Ovary (tissue), 10 donors: ENCODE measurements at regions of chr12 and their contacts with region 1.

Region 1: DNA sequence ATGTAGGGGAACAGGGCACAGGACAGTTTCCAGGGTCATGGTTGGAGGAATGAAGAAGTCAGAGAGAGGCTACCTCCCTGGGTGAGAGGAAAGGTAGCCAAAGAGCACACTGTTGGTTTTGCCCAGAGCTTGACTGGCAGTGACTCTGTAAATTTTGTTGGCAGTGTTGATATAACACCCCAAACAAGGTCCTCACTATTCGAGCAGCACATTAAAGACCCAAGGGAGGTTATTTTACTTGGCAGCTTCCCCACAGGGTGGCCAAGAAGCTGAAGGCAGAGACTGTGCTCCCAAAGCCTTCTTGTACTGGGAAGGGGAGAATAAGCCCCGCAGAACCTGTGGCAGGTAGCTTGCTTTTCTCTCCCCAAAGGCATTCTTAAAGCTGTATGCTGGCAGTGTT is 40.6 kb downstream of the WSCD2 start:
- DNase-seq: no peak
- H3K4me3 ChIP-seq: no peak overlapping the region
- H3K27ac ChIP-seq: no peak overlapping the region
- H3K4me1 ChIP-seq: no peaks in the 10 kb centered on the region
- H3K27me3 ChIP-seq: no peaks in the 10 kb centered on the region
- CTCF ChIP-seq: no peak
- EP300 ChIP-seq: no peak
- POLR2A ChIP-seq: no peak

Region 2: DNA sequence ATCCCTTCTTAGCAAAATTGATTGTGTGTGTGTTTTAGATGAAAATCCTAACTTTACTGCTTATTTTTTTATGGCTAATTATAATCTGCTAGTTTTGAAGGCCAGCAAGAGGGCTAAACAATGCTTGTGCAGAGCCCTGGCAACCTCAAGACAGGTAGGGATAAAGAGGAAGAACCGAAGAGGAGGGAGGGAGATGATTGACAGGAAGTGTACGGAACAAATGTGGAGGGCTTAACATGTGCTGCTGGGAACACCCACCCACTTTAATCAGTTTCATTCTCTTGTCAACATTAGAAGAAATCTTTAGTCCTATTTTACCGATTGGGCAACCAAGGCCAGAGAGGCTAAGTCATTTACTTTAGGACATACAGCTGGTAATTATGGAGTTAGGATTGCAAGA is 42.1 kb before region 1 on chr12:
- intact Hi-C with region 1: loop called in 1 of 4 experiments (anchors 1 kb)
- DNase-seq: no peak
- H3K4me3 ChIP-seq: no peak overlapping the region
- H3K27ac ChIP-seq: no peak overlapping the region
- H3K4me1 ChIP-seq: no peaks in the 10 kb centered on the region
- H3K27me3 ChIP-seq: no peaks in the 10 kb centered on the region
- CTCF ChIP-seq: no peak
- EP300 ChIP-seq: no peak
- POLR2A ChIP-seq: no peak

Region 3: DNA sequence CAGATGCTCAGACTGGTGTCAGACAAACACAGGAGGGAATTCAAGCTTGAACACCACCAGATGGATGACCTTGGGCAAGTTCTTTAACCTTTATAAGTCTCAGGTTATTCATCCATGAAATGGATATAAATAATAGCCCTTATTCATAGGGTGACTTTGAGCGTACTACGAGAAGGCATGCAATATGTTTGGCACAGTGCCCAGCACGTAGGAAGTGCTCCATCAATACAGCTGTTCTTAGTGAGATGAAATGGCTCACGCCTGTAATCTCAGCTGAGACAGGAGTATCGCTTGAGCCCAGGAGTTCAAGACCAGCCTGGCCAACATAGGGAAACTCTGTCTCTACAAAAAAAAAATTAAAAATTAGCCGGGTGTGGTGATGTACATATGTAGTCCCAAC is 260.5 kb after region 1 on chr12:
- intact Hi-C with region 1: no loop called
- DNase-seq: no peak
- H3K4me3 ChIP-seq: no peak overlapping the region
- H3K27ac ChIP-seq: no peak overlapping the region
- H3K4me1 ChIP-seq: no peaks in the 10 kb centered on the region
- H3K27me3 ChIP-seq: no peaks in the 10 kb centered on the region
- CTCF ChIP-seq: no peak
- EP300 ChIP-seq: no peak
- POLR2A ChIP-seq: no peak